Motor neuron (in vitro differentiated cells): ENCODE measurements at regions of chr16 and their contacts with region 1.

Region 1: GRCh38 chr16:8674413-8675022 is at the start of gene ABAT:
- ATAC-seq: peak; percentile 93 to 99 (median 98)
- H3K4me3 ChIP-seq: peak within 1 kb of the TSS; percentile 47 to 96 (median 65)
- H3K27ac ChIP-seq: no peak within 1 kb of the TSS
- H3K4me1 ChIP-seq: peaks cover 13 to 21% of the 10 kb centered on the region in 2 donors
- total RNA-seq, gene ABAT: 21.2 to 125 (median 84.4) TPM

Region 2: GRCh38 chr16:8797364-8798173 is 123.1 kb after region 1 on chr16 and contains the starts of genes PMM2 and TMEM186:
- in situ Hi-C with region 1: loop called in 7 of 9 experiments (anchors 10 to 25 kb)
- ATAC-seq: peak; percentile 90 to 99 (median 97)
- H3K4me3 ChIP-seq: peak within 1 kb of the TSS; percentile 63 to 96 (median 89)
- H3K27ac ChIP-seq: peak within 1 kb of the TSS; percentile 94 to 99
- H3K4me1 ChIP-seq: peaks cover 12% of the 10 kb centered on the region in 2 donors
- total RNA-seq, gene PMM2: 14.5 to 58.6 (median 34.6) TPM
- total RNA-seq, gene TMEM186: 6.9 to 15.9 (median 10.0) TPM

Region 3: DNA sequence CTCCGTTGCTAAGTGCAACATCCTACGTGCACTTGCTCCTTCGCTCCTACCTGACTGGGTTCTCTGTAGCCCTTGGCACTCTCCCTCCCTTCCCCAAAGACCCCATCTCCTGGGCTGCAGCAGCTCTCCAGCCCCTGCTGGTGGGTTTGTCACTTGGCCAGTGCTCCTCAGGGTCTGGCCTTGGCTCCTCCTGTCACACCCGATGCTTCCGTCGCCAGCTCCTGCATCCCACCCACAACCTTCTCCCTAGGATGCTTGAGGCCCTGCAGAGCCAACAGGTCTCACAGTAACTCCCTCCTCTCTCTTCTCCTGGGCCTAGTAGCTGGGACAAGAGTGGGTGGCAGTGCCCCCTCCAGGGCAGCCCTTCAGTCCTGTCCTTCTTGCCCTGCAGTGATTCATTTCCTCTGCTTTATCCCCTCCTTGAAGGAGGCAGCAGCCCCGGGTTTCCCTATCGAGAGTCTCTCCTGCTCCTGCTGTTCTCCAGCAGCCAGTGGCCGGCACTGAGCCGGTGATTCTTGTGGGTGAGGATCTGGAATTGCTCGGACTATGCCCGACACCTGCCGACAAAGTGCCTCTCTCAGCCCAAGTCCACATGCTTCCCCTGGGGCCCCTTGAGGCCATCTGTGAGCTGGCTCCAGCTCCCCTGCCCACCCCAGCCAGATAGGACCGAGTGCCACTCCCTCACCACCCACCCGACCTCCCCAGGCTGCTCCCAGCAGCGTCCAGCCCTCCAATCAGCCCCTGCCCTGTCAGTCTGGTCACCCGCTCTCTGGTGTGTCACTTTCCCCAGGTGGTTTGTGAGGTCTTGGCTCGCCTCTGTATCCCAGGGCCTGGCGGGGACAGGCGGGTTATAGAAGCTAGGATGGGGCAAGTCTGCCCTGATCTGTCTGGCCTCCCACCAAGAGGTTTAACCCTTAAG is 211.4 kb after region 1 on chr16:
- in situ Hi-C with region 1: loop called in 2 of 9 experiments (anchors 25 kb)
- ATAC-seq: peak; percentile 20 to 77 (median 58)
- H3K4me3 ChIP-seq: no peak overlapping the region
- H3K27ac ChIP-seq: no peak overlapping the region
- H3K4me1 ChIP-seq: peaks cover 0 to 14% of the 10 kb centered on the region in 2 donors